Heart left ventricle (tissue), 16 donors: ENCODE measurements at regions of chr20 and their contacts with region 1.

Region 1: DNA sequence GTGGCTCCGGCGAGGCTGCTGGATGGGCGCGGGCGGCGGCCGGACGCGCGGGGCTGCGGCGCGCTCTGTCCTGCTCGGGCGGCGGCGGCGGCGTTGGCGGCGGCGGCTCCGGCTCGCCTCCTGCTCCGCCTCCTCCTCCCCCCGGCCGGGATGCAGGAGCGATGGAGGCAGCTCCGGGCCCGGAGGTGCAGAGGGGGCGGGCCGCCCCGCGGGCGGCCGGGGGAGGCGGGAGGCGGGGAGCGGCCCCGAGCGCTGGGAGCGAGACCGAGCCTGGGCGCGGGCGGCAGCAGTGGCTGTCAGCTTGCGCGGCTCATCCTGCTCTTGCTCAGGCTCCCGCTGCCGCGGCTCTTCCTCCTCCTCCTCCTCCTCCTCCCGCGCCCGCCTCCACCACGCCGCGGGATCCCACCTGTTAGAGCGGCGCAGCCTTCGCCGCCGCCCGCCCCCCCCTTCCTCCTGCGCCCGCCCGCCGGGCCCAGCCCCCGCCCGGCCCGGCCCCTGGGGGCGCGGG is at the start of gene NOL4L:
- DNase-seq: peak in 1 of 5 donors; percentile 47
- ATAC-seq: peak in 2 of 4 donors; percentile 7 to 9
- H3K4me3 ChIP-seq: peak within 1 kb of the TSS; percentile 37 to 80 (median 64)
- H3K27ac ChIP-seq: peak within 1 kb of the TSS in 4 of 12 donors; percentile 34 to 80 (median 53)
- H3K4me1 ChIP-seq: peaks cover 0 to 36% (median 4%) of the 10 kb centered on the region in 12 donors
- H3K27me3 ChIP-seq: peaks cover 0 to 14% (median 4%) of the 10 kb centered on the region in 9 donors
- CTCF ChIP-seq: no peak
- POLR2A ChIP-seq: no peak
- total RNA-seq, gene NOL4L: 3.1 to 15.0 (median 6.7) TPM

Region 2: GRCh38 chr20:32485770-32486478 is 99.1 kb before region 1 on chr20:
- intact Hi-C with region 1: no loop called
- DNase-seq: no peak
- ATAC-seq: no peak
- H3K4me3 ChIP-seq: peak overlapping the region in 1 of 12 donors; percentile 81
- H3K27ac ChIP-seq: peak overlapping the region in 4 of 12 donors; percentile 29 to 89 (median 60)
- H3K4me1 ChIP-seq: peaks cover 0 to 34% (median 18%) of the 10 kb centered on the region in 12 donors
- H3K27me3 ChIP-seq: no peaks in the 10 kb centered on the region
- CTCF ChIP-seq: no peak
- POLR2A ChIP-seq: no peak

Region 3: DNA sequence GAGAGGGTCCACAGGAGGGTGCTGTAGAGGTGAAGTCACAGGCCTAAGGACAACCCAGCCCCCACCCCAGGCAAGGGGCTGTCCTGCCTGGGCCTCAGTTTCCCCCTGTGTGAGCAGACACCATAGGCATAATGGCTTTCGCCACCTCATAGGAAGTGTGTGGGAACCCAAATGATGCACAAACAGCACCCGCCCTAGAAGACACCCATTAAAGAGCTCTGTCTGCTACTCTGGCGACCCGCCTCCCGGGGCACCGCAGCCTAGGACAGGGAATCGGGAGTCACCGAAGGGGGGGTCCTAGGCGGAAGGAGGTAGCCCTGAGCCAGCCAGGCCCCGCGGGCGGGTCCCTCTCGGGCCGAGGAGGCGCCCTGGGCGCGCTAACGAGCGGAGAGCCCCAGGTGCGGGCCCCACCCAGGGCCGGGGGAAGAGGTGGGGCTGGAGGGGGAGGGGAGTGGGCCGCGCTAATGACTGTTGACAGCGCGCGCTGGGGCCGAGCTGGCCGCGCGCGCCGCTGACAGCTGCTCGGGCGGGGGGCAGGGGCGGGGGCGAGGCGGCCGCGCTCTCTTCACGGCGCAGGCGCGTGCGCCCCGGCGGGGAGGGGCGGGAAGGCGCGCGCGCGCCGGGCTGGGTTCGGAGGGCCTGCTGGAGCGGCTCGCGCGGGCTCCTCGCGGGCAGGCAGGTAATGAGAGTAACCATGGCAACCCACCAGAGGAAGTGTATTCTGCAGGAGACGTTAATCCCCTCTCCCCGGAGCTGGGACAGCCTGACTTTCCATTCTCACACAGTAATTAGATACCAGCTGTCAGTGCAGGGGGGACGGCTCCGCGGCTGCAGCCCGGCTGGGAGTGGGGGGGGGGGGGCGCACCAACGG is 48.9 kb before region 1 on chr20:
- intact Hi-C with region 1: loop called in 4 of 10 experiments (anchors 5 to 10 kb)
- DNase-seq: peak; percentile 34 to 75 (median 52)
- ATAC-seq: peak; percentile 20 to 75 (median 60)
- H3K4me3 ChIP-seq: peak overlapping the region in 11 of 12 donors; percentile 18 to 69 (median 59)
- H3K27ac ChIP-seq: peak overlapping the region in 6 of 12 donors; percentile 15 to 89 (median 52)
- H3K4me1 ChIP-seq: peaks cover 0 to 52% (median 11%) of the 10 kb centered on the region in 12 donors
- H3K27me3 ChIP-seq: no peaks in the 10 kb centered on the region
- CTCF ChIP-seq: no peak
- POLR2A ChIP-seq: no peak